Activated naive CD4-positive, alpha-beta T cell treated with anti-CD3 and anti-CD28 coated beads, Interleukin-2, amount 10 ng/mL, durations not matched to agents 7 days and 5 days (primary cell): ENCODE measurements at regions of chr12 and their contacts with region 1.

Region 1: GRCh38 chr12:92505254-92506231 is 197.2 kb upstream of the PLEKHG7 start:
- DNase-seq: peak; percentile 74
- H3K4me3 Mint-ChIP-seq: peak overlapping the region; percentile 68
- H3K27ac Mint-ChIP-seq: peak overlapping the region; percentile 89
- H3K4me1 Mint-ChIP-seq: peaks cover 42% of the 10 kb centered on the region
- H3K27me3 Mint-ChIP-seq: no peaks in the 10 kb centered on the region

Region 2: GRCh38 chr12:92408072-92408900 is 97.3 kb before region 1 on chr12:
- CTCF ChIA-PET with region 1: interaction called, 10 read pairs
- DNase-seq: peak; percentile 71
- H3K4me3 Mint-ChIP-seq: no peak overlapping the region
- H3K27ac Mint-ChIP-seq: peak overlapping the region; percentile 64
- H3K4me1 Mint-ChIP-seq: peaks cover 52% of the 10 kb centered on the region
- H3K27me3 Mint-ChIP-seq: no peaks in the 10 kb centered on the region

Region 3: DNA sequence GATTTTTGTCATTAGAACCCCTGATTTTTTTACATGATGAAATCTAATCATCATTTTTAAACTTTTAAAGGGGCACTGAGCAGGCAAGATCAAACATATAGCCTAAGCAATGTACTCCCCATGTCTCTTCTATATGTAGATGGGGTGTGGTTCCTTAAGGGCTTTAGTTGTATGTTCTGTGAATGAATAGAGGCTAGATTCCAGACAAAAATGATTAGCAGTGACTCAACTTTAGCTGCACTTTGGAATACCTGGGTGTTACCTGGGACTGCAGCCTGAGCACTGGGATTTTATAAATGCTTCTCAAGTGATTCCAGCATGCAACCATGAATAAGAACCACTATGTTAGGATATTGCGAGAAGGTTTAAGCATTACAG is 59.5 kb before region 1 on chr12:
- CTCF ChIA-PET with region 1: no interaction called
- DNase-seq: no peak
- H3K4me3 Mint-ChIP-seq: no peak overlapping the region
- H3K27ac Mint-ChIP-seq: no peak overlapping the region
- H3K4me1 Mint-ChIP-seq: peaks cover 12% of the 10 kb centered on the region
- H3K27me3 Mint-ChIP-seq: no peaks in the 10 kb centered on the region

Region 4: DNA sequence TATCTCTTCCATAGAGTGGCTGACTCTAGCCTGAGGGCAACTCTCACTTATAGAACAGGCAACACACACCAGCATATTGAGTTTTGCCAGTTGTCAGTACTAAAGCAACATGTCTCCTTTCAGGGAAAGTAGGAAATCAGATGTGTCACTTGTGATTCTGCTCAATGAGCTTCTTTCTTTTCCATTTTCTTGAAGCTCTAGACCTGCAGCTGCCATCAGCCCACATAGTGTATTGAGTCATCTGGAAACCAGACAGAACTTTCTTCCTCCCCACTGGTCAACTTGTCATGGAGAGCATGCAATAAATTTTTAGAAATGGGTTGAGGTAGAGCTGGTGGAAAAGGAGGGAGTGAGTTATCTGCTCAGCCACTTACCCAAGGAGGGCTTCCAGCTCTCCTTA is 11.7 kb before region 1 on chr12:
- CTCF ChIA-PET with region 1: interaction called, 32 read pairs
- DNase-seq: no peak
- H3K4me3 Mint-ChIP-seq: no peak overlapping the region
- H3K27ac Mint-ChIP-seq: no peak overlapping the region
- H3K4me1 Mint-ChIP-seq: peaks cover 8% of the 10 kb centered on the region
- H3K27me3 Mint-ChIP-seq: no peaks in the 10 kb centered on the region